Tibial artery (tissue), 4 donors: ENCODE measurements at regions of chr2 and their contacts with region 1.

Region 1: GRCh38 chr2:66574701-66575624 is 140.0 kb downstream of the MEIS1 start:
- DNase-seq: peak in 1 of 2 donors; percentile 73
- H3K4me3 ChIP-seq: peak overlapping the region; percentile 55 to 75
- H3K27ac ChIP-seq: peak overlapping the region; percentile 40 to 50
- H3K4me1 ChIP-seq: peaks cover 0 to 30% (median 26%) of the 10 kb centered on the region in 4 donors
- H3K27me3 ChIP-seq: peaks cover 5 to 44% of the 10 kb centered on the region in 2 donors
- CTCF ChIP-seq: peak; percentile 29 to 45

Region 2: GRCh38 chr2:66490588-66491001 is 84.4 kb before region 1 on chr2:
- intact Hi-C with region 1: no loop called
- DNase-seq: no peak
- H3K4me3 ChIP-seq: no peak overlapping the region
- H3K27ac ChIP-seq: no peak overlapping the region
- H3K4me1 ChIP-seq: peaks cover 0 to 13% (median 9%) of the 10 kb centered on the region in 4 donors
- H3K27me3 ChIP-seq: no peaks in the 10 kb centered on the region
- CTCF ChIP-seq: no peak

Region 3: GRCh38 chr2:67840460-67841068 is 1265.6 kb after region 1 on chr2:
- intact Hi-C with region 1: loop called (anchors 10 kb)
- DNase-seq: peak; percentile 35 to 79
- H3K4me3 ChIP-seq: no peak overlapping the region
- H3K27ac ChIP-seq: no peak overlapping the region
- H3K4me1 ChIP-seq: no peaks in the 10 kb centered on the region
- H3K27me3 ChIP-seq: no peaks in the 10 kb centered on the region
- CTCF ChIP-seq: peak; percentile 72 to 80